ENCODE measurements at regions of chr18 and their contacts with region 1.

Region 1: DNA sequence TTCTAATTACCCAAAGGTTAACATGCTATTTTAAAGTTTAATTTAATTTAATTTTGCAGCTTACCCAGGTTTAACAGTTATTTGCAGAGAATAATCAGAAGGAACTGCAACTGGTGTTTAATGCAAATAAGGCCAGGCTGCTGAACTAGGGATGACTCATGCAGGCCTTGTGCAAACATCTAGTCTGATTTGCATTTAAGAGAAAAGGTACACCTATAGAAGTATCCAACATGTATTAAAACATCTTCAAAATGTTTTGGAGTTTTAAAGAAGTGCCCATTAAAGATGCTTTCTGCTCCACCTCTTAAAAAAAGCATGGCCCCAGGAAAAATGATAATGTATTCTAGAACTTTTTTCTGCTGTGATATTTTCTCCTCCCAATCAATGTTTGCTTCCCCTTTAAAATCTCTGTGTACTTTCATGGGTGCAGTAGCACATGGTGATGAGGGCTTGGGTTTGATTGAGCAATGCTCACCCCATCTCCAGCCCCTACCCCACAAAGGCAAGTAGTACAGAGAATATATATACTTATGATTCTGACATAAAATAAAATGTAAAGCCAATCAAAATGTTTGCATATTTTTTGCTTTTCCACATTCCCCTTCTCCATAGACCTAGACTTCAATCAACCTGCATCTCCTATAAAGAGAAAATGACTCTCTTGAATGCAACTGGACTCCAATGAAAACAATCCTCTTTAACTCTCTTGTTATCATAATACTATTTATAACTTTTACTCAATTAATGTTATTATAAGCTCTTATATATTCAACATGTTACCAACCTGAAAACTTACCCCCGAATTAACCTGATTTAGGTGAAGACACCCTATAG is 54.1 kb downstream of the ATP8B1 start:
- DNase-seq: no peak
- ATAC-seq: no peak
- H3K4me3 ChIP-seq: no peak overlapping the region
- H3K27ac ChIP-seq: peak overlapping the region in 1 of 2 donors; percentile 82
- H3K4me1 ChIP-seq: peaks cover 7 to 21% of the 10 kb centered on the region in 2 donors
- H3K27me3 ChIP-seq: no peaks in the 10 kb centered on the region

Region 2: GRCh38 chr18:57762686-57763085 is 13.7 kb after region 1 on chr18:
- intact Hi-C with region 1: loop called in 1 of 2 experiments (anchors 2 kb)
- DNase-seq: no peak
- ATAC-seq: no peak
- H3K4me3 ChIP-seq: no peak overlapping the region
- H3K27ac ChIP-seq: no peak overlapping the region
- H3K4me1 ChIP-seq: no peaks in the 10 kb centered on the region
- H3K27me3 ChIP-seq: no peaks in the 10 kb centered on the region

Region 3: DNA sequence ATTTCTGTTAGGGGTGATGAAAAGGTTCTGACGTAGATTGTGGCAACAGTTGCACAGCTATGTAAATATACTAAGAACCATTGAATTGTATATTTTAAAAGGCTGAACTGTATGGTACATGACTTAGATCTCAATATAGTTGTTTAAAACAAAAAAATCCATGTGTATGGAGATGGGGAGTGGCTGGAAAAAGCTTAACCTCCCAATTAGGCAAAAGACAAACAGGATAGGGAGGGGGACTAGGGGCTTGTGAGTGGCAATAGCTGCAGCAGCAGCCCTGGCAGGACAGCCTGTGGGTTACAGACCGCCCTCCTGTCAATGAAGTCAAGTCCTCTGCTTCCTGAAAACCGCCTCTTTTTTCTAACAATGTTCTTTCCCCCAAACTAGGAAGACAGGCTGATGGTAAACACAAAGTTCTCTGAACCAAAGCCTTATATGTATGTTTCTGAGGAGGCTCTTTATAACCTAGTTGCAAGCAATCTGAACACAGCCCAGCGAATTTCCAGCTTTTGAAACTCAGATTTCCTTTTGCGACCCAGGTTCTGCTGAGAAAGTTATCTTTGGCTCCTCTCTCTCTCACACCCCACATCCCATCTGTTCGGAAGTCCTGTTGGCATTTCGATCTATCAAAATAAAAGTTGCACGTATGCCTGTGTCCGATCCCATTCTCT is 43.8 kb after region 1 on chr18:
- intact Hi-C with region 1: loop called in 1 of 2 experiments (anchors 5 kb)
- DNase-seq: no peak
- ATAC-seq: peak; percentile 62
- H3K4me3 ChIP-seq: no peak overlapping the region
- H3K27ac ChIP-seq: peak overlapping the region; percentile 90 to 95
- H3K4me1 ChIP-seq: peaks cover 9 to 10% of the 10 kb centered on the region in 2 donors
- H3K27me3 ChIP-seq: no peaks in the 10 kb centered on the region